Activated CD8-positive, alpha-beta T cell treated with anti-CD3 and anti-CD28 coated beads for 36 hours (primary cell): ENCODE measurements at regions of chr14 and their contacts with region 1.

Region 1: DNA sequence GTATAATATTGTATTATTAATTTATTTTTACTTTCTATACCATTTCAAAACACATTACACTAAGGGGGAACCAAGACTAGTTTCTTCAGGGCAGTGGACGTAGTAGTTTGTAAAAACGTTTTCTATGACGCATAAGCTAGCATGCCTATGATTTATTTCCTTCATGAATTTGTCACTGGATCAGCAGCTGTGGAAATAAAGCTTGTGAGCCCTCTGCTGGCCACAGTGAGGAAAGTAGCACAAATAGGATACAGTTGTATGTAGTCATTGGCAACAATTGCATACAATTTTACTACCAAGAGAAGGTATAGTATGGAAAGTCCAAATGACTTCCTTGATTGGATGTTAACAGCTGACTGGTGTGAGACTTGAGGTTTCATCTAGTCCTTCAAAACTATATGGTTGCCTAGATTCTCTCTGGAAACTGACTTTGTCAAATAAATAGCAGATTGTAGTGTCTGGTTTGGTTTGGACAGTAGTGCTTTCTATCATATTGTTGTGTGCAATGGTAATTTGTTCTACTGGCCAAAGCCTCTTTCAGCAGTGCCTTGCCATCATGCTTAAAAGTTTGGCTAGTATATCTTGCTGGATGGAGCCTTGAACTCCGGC is 24.3 kb upstream of the PLEKHD1 start:
- DNase-seq: peak; percentile 79
- ATAC-seq: peak; percentile 91
- H3K4me3 Mint-ChIP-seq: no peak overlapping the region
- H3K27ac Mint-ChIP-seq: no peak overlapping the region
- H3K4me1 Mint-ChIP-seq: no peaks in the 10 kb centered on the region
- H3K27me3 Mint-ChIP-seq: no peaks in the 10 kb centered on the region
- CTCF ChIP-seq: peak; percentile 77

Region 2: DNA sequence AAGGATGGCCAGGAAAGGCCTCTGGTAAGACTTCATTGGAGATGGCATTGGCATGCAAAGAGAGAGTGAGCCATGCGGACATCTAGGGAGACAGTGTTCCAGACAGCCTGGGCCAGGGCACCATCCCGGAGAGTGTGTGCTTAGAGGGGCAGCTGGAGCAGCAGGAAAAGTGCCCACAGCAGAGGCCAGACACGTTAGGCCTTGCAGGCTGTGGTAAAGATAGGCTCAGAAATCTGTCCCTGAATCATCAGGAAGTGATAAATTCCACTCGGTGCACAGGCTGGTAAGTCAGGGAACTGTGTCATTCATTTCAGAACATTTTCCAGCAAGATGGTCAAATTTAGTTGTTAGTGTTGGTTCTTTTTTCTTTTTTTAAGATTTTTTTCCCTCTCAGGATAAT is 191.4 kb before region 1 on chr14:
- CTCF ChIA-PET with region 1: no interaction called
- POLR2A ChIA-PET with region 1: no interaction called
- intact Hi-C with region 1: no loop called
- DNase-seq: no peak
- ATAC-seq: no peak
- H3K4me3 Mint-ChIP-seq: no peak overlapping the region
- H3K27ac Mint-ChIP-seq: no peak overlapping the region
- H3K4me1 Mint-ChIP-seq: no peaks in the 10 kb centered on the region
- H3K27me3 Mint-ChIP-seq: peaks cover 1% of the 10 kb centered on the region
- CTCF ChIP-seq: no peak

Region 3: DNA sequence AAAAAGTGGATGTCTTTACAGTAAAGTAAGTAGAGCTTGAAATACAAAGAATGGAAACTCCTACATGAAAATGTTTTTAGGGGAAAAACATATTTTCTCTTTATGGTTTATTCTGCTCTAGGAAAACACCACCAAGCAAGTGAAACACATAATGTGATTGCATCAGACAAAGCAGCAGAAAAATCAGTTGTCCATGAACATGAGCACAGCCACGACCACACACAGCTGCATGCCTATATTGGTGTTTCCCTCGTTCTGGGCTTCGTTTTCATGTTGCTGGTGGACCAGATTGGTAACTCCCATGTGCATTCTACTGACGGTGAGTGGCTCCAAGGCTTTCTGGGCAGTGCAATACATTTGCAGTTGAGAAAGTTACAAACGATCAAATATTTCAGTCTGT is 18.2 kb before region 1 on chr14:
- CTCF ChIA-PET with region 1: interaction called, 12 read pairs
- POLR2A ChIA-PET with region 1: interaction called, 4 read pairs
- intact Hi-C with region 1: no loop called
- DNase-seq: no peak
- ATAC-seq: peak; percentile 34
- H3K4me3 Mint-ChIP-seq: peak overlapping the region; percentile 30
- H3K27ac Mint-ChIP-seq: peak overlapping the region; percentile 32
- H3K4me1 Mint-ChIP-seq: peaks cover 18% of the 10 kb centered on the region
- H3K27me3 Mint-ChIP-seq: no peaks in the 10 kb centered on the region
- CTCF ChIP-seq: no peak

Region 4: GRCh38 chr14:69475194-69475818 is 15.1 kb after region 1 on chr14:
- CTCF ChIA-PET with region 1: interaction called, 16 read pairs
- POLR2A ChIA-PET with region 1: no interaction called
- intact Hi-C with region 1: no loop called
- DNase-seq: peak; percentile 10
- ATAC-seq: peak; percentile 70
- H3K4me3 Mint-ChIP-seq: no peak overlapping the region
- H3K27ac Mint-ChIP-seq: no peak overlapping the region
- H3K4me1 Mint-ChIP-seq: no peaks in the 10 kb centered on the region
- H3K27me3 Mint-ChIP-seq: peaks cover 3% of the 10 kb centered on the region
- CTCF ChIP-seq: peak; percentile 36

Region 5: DNA sequence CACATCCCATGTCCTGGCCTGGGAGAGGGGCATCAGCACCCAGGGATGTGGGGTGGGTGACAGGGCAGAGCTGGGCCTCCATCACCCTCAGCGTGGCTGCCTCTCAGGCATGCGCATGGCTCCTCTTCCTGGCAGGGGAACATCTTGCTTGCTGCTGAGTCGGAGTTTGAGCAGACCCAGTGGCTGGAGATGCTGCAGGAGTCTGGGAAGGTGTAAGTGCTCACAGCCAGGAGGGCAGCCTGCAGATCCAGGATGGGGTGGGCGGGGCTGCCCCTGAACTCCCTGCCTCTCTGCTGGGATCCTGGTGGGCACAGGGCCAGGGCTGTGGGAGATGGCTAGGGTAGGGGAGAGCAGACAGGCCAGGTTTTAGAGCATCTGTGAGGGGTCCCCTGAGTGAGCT is 40.5 kb after region 1 on chr14:
- CTCF ChIA-PET with region 1: no interaction called
- POLR2A ChIA-PET with region 1: no interaction called
- intact Hi-C with region 1: no loop called
- DNase-seq: no peak
- ATAC-seq: no peak
- H3K4me3 Mint-ChIP-seq: no peak overlapping the region
- H3K27ac Mint-ChIP-seq: no peak overlapping the region
- H3K4me1 Mint-ChIP-seq: no peaks in the 10 kb centered on the region
- H3K27me3 Mint-ChIP-seq: no peaks in the 10 kb centered on the region
- CTCF ChIP-seq: no peak